ENCODE measurements at regions of chr1 and their contacts with region 1.

Region 1: DNA sequence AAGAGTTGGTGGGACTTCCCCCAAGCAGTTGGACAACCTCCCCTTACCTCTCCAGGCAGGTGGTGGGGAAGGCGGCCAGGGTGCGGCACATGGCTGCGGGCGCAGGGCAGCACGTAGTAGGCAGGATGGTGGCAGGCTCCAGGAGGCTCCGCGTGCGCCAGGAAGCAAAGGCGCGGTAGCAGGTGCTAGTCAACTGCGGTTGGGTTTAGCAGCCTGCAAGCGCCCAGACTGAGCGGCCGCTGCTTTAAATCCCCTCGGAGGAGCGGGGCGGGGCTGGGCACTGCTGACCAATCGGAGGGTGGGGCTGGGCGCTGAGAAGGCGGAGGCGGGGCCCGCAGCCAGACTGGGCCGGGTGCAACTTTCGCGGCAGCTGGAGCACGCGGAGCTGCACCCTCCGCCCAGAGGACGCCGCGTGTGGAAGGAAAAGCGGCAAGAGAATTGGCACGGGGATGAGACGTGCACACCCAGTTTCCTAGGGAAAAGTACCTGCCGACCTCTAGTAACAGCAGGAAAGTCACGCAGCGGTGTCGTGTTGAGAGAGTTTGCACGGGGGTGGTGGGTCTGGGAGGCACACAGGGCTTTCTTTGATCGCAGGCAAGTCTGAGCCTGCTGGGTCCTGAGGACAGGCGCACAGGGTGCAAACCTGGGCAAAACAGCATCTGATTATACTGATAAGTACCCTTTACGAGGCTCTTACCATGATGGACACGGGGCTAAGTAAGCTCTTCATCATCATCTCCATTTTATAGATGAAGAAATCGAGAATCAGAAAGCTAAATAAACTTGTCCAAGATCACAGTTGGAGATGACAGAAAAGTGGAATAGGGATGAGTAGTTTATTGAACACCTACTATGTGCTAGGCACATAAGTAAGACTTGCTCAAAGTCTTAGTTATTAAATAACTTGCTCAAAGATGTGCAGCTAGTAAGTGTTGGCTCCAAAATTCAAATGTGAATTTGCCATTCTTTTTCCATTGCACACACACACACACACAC is at the start of gene RGS16:
- DNase-seq: peak; percentile 93
- ATAC-seq: peak; percentile 89
- H3K4me3 Mint-ChIP-seq: no peak within 1 kb of the TSS
- H3K27ac Mint-ChIP-seq: peak within 1 kb of the TSS; percentile 47
- H3K4me1 Mint-ChIP-seq: peaks cover 11% of the 10 kb centered on the region
- H3K27me3 Mint-ChIP-seq: peaks cover 28% of the 10 kb centered on the region
- total RNA-seq, gene RGS16: 0.63 to 0.66 TPM

Region 2: GRCh38 chr1:182588500-182589452 is 15.7 kb before region 1 on chr1 and contains the start of gene RNASEL:
- CTCF ChIA-PET with region 1: interaction called, 120 read pairs
- POLR2A ChIA-PET with region 1: no interaction called
- DNase-seq: peak; percentile 65
- ATAC-seq: peak; percentile 94
- H3K4me3 Mint-ChIP-seq: peak within 1 kb of the TSS; percentile 83
- H3K27ac Mint-ChIP-seq: peak within 1 kb of the TSS; percentile 98
- H3K4me1 Mint-ChIP-seq: peaks cover 17% of the 10 kb centered on the region
- H3K27me3 Mint-ChIP-seq: peaks cover 5% of the 10 kb centered on the region
- total RNA-seq, gene RNASEL: 5.7 to 6.0 TPM

Region 3: DNA sequence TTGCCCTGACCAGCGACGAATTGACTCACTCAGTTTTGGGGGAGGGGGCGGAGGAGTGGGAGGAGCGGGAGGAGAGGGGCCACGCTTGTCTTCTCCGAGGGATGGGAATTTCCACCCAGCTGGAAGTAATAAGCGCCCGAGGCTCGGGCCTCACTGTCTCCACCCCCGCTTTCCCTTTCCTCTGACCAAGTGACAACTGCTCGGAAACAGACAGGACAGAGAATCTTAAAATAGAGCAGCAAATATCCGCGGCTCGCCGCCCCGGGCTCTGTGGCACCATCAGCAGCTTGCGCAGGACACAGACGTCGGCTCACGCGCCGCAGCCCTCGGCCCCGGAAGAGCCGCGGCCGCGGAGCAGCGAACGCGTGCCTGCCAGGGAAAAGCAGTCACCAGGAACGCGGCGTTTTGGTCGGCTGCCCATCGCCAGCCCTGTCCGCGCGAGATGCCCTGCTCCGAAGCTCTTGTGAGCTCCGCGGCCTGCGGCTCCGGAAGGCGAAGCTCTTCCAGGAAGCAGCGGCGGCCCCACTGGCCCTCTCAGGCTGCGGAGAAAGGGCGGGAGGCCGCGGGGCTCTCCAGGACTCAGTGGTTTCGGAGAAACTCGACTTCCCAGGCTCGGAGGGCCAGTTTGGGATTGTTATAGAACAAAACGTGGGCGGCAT is 10.5 kb after region 1 on chr1:
- CTCF ChIA-PET with region 1: interaction called, 66 read pairs
- POLR2A ChIA-PET with region 1: interaction called, 43 read pairs
- DNase-seq: peak; percentile 52
- ATAC-seq: peak; percentile 38
- H3K4me3 Mint-ChIP-seq: peak overlapping the region; percentile 61
- H3K27ac Mint-ChIP-seq: peak overlapping the region; percentile 85
- H3K4me1 Mint-ChIP-seq: peaks cover 56% of the 10 kb centered on the region
- H3K27me3 Mint-ChIP-seq: peaks cover 75% of the 10 kb centered on the region

Region 4: GRCh38 chr1:182629499-182630096 is 25.1 kb after region 1 on chr1:
- CTCF ChIA-PET with region 1: interaction called, 35 read pairs
- POLR2A ChIA-PET with region 1: interaction called, 5 read pairs
- DNase-seq: peak; percentile 61
- ATAC-seq: peak; percentile 84
- H3K4me3 Mint-ChIP-seq: no peak overlapping the region
- H3K27ac Mint-ChIP-seq: no peak overlapping the region
- H3K4me1 Mint-ChIP-seq: peaks cover 54% of the 10 kb centered on the region
- H3K27me3 Mint-ChIP-seq: peaks cover 55% of the 10 kb centered on the region

Region 5: DNA sequence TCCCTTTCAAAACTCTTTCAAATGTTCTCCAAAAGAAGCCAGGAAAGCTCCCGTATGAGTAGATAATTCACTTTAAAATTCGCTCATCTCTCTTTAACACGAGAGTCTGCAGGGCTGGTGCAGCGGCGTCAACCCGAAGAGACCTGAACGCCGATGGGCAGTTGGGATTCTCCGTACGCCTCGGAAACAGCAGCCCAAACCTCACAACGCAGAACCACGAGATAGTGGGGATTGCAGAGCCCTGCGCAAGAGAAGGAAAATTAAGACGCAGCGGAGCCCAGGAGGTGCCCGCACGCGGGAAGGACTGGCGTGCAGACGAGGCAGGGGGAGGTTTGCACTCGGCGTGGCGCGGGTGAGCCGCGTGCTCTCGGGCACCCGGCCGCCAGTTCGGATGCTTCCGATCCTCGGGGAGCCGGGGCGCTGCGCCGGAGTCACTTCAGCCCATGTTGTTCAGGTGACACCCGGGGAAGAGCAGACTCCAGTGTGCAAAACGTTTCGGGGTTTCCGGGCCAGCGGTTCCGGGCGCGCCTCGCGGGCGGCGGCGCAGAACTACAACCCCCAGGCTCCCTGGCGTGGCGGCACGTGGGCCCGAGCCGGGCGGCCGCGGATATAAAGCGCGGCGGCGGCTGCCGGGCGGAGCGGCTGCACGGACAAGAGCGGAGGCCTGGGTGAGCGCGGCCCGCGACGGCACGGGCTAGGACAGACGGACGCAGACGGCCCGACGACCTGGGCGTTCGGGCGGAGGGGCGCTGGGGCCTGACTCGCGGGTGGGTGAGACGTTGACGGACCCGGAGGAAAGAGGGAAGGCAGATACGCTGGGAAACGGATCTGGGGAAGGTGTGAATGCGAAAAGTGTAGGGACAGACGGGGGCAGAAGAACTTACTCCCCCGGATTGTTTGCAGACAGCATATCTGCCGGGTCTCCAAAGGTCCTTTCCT is 184.9 kb after region 1 on chr1 and contains the start of gene NPL:
- CTCF ChIA-PET with region 1: interaction called, 899 read pairs
- POLR2A ChIA-PET with region 1: interaction called, 5 read pairs
- DNase-seq: peak; percentile 89
- ATAC-seq: peak; percentile 94
- H3K4me3 Mint-ChIP-seq: peak within 1 kb of the TSS; percentile 80
- H3K27ac Mint-ChIP-seq: peak within 1 kb of the TSS; percentile 68
- H3K4me1 Mint-ChIP-seq: peaks cover 12% of the 10 kb centered on the region
- H3K27me3 Mint-ChIP-seq: peaks cover 29% of the 10 kb centered on the region
- total RNA-seq, gene NPL: 1.1 to 1.7 TPM

Measured in activated CD8-positive, alpha-beta T cell treated with anti-CD3 and anti-CD28 coated beads, Interleukin-2, amount 10 ng/mL, durations not matched to agents 7 days and 5 days (primary cell).